ENCODE measurements at regions of chr11 and their contacts with region 1.

Region 1: DNA sequence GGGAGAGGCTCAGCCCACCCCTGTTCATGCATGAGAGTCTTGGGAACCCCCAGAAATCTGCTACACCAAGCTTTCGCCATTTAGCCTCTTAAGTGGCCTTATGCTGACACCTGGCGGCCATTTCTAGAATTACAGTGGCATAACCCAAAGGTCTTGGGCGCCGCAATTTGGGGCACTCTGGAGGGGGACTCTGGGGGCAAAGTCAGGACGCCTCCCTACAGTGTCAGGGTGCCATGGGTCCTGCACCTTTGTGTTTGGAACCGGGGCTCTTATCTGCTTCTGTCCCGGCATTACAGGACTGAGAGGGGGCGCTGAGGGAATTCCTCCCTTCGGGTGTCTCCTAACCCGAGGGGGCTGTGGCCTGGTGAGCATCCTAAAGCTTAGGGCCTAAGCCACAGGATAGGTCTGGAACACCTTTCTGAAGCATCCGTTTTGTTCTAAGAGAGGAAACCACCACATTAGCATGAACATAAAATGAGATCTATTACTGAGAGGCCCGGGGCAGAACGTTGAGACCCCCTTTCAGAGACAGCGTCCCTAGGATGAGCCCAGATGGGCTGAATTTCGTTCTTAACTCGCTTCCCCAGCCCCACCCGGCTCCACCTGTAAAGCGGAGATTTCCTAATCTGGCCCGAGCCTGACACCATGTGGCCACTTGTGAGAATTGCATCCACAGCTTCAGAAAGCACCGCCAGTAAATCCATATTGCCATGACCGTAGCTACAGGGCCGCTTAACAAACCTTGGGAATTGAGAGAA is 9.3 kb downstream of the INS start:
- DNase-seq: peak; percentile 74 to 86 (median 85)
- ATAC-seq: peak; percentile 18 to 46
- H3K4me3 ChIP-seq: no peak overlapping the region
- H3K27ac ChIP-seq: no peak overlapping the region
- H3K4me1 ChIP-seq: no peaks in the 10 kb centered on the region
- H3K27me3 ChIP-seq: no peaks in the 10 kb centered on the region

Region 2: GRCh38 chr11:1652771-1653540 is 498.7 kb before region 1 on chr11:
- intact Hi-C with region 1: loop called in 3 of 4 experiments (anchors 5 to 10 kb)
- DNase-seq: peak; percentile 72 to 90 (median 88)
- ATAC-seq: peak; percentile 76 to 83
- H3K4me3 ChIP-seq: no peak overlapping the region
- H3K27ac ChIP-seq: no peak overlapping the region
- H3K4me1 ChIP-seq: no peaks in the 10 kb centered on the region
- H3K27me3 ChIP-seq: no peaks in the 10 kb centered on the region

Region 3: DNA sequence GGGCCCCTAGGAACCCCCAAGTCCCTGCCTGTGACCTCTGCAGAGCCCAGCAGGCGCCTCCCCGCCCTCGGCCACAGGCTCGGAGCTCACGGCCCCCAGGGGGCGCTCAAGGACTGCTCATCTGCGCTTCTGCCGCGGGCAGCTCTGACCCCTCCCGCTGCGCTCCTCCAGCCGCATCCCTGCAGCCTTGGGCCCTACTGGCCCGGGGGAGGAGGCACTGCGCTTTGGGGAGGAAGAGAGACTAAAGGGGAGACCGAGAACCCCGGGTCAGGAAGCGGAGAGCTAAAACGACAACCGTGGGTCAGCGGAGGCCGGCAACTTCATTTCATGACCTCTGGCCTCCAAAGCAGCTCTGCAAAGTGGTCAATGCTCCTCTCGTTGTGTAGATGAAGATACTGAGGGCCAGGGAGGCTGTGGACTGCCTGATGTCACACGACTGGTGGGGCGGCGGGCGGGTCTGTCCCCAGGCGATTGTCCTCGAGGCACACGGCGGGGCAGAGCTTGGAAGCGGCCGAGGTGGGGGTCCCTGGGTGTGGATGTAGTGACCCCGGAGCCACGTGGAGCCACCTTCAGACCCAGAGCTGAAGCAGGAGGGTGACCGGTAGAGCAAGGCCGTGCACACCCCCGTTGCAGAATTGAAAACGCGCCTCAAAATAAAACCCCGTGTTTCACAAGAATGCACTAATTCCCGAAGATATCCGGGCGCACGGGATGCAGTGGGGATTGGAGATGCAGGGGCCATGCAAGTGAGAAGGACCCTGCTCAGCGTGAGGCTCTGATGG is 457.4 kb before region 1 on chr11:
- intact Hi-C with region 1: loop called (anchors 5 to 10 kb)
- DNase-seq: peak; percentile 87 to 96 (median 96)
- ATAC-seq: peak; percentile 95
- H3K4me3 ChIP-seq: no peak overlapping the region
- H3K27ac ChIP-seq: no peak overlapping the region
- H3K4me1 ChIP-seq: no peaks in the 10 kb centered on the region
- H3K27me3 ChIP-seq: no peaks in the 10 kb centered on the region

Region 4: DNA sequence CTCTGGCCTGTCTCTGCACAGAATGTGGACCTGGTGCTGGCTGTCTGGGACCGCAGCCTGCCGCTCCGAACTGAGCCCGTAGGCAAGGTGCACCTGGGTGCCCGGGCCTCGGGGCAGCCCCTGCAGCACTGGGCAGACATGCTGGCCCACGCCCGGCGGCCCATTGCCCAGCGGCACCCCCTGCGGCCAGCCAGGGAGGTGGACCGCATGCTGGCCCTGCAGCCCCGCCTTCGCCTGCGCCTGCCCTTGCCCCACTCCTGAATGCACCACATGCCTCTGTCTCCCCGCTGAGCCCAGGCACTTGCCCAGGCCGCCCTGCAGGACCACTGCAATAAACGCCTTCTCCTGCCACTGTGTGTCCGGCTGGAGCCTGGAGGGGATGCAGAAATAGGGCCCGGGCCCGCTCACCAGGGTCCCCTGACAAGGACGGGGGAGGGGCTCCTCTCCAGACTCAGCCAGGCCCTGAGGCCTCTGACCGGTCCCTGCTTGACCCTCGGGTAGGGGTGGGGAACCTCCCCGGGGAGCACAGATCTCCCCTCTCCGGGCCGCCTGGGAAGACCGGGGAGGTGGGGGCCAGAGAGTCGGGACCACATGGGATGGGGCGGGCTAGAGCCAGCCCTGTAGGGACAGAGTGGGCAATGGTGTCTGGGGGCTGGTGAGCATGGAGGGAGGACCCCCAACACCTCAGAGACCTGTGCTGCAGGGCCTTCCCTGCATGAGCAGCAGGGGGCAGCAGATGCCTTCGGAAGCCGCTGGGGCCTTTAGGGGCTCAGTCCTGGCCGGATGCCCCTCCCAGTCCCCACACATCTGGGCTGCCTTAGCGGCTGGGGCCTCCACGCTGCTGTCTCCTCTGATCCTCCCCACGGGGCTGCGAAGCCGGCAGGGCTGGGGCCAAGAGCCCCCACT is 314.3 kb before region 1 on chr11:
- intact Hi-C with region 1: loop called (anchors 2 to 10 kb)
- DNase-seq: peak; percentile 73 to 89 (median 89)
- ATAC-seq: peak; percentile 32 to 55
- H3K4me3 ChIP-seq: no peak overlapping the region
- H3K27ac ChIP-seq: no peak overlapping the region
- H3K4me1 ChIP-seq: no peaks in the 10 kb centered on the region
- H3K27me3 ChIP-seq: no peaks in the 10 kb centered on the region

Region 5: DNA sequence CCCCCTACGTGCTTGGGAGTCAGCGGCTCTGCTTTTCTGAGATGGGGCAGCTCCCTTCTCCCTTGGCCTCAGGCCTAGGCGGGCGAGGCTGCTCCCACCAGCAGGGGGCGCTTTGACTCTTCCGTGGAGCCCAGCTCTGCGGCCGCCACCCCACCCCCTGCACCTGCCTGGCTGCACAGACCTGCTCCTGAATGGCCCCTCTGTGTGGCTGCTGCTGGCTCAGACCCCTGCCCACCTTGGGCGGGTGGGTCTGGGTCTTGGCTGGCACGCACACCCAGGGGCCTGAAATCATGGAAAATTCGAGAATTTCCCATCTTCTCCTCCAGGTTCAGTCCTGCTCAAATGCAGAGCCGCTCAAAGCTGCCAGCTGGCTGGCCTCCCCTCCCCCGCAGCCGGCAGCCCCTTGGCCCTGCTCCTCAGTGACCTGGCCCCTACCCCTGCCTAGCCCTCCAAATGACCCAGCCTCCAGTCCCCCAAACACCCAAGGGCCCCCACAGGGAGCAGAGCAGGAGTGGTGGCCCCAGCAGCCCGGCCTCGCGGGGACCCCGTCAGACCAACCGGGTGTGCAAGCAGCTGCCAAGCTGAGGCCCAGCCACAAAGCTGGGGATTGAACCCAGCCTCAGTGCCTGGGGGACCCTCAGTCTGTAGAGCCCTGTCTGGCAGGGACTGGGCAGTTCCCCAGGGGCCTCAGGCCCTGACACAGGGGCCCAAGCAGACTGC is 269.0 kb before region 1 on chr11:
- intact Hi-C with region 1: loop called in 1 of 4 experiments (anchors 5 kb)
- DNase-seq: peak; percentile 85 to 95 (median 95)
- ATAC-seq: peak; percentile 75 to 82
- H3K4me3 ChIP-seq: no peak overlapping the region
- H3K27ac ChIP-seq: peak overlapping the region; percentile 50
- H3K4me1 ChIP-seq: peaks cover 5% of the 10 kb centered on the region
- H3K27me3 ChIP-seq: no peaks in the 10 kb centered on the region

Region 6: DNA sequence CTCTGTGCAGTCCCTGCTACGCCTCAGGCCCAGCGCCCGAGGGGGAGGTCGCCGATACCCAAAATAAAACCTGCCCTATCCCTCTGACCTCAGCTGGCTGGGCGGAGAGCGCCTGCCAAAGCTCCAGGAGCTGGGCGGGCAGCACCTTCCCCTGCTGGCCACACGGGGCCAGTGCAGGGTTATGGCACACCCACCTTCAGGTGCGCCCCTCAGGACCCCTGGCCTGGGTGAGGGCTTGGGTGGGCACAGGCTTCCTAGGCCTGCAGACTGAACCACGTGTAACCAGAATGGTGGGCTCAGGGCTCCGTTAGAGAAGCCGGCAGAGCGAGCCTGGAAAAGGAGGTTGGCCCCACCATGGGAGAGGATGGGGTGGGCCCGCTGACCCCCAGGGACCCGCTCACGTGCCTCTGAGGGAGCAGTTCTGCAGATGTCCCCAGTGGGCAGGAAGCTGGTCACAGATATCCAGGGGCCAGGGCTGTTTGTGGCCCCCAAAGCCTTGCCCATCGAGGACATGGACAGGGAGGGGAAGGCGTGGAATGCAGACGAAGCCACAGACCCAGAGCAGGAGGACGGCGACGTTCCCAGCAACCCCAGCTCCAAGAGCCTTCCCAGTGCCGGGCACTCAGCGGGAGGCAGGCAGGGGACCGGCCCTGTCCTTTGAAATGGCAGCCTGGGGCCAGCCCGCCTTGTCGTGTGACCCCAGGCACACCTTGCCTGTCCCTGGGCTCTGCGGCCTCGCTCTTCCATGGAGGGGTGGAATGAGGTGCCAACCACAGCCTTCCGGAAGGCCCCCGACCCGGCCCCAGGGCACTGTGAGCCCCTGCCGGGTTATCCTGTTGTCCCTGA is 233.8 kb before region 1 on chr11:
- intact Hi-C with region 1: loop called in 1 of 4 experiments (anchors 10 kb)
- DNase-seq: peak in 1 of 3 donors; percentile 68
- ATAC-seq: peak; percentile 16 to 30
- H3K4me3 ChIP-seq: no peak overlapping the region
- H3K27ac ChIP-seq: no peak overlapping the region
- H3K4me1 ChIP-seq: peaks cover 4% of the 10 kb centered on the region
- H3K27me3 ChIP-seq: no peaks in the 10 kb centered on the region

Region 7: GRCh38 chr11:2186669-2187279 is 35.1 kb after region 1 on chr11:
- intact Hi-C with region 1: no loop called
- DNase-seq: no peak
- ATAC-seq: peak; percentile 17 to 28
- H3K4me3 ChIP-seq: no peak overlapping the region
- H3K27ac ChIP-seq: no peak overlapping the region
- H3K4me1 ChIP-seq: no peaks in the 10 kb centered on the region
- H3K27me3 ChIP-seq: no peaks in the 10 kb centered on the region

Measured in right cardiac atrium (tissue), 5 donors.